ENCODE measurements at regions of chr15 and their contacts with region 1.

Region 1: DNA sequence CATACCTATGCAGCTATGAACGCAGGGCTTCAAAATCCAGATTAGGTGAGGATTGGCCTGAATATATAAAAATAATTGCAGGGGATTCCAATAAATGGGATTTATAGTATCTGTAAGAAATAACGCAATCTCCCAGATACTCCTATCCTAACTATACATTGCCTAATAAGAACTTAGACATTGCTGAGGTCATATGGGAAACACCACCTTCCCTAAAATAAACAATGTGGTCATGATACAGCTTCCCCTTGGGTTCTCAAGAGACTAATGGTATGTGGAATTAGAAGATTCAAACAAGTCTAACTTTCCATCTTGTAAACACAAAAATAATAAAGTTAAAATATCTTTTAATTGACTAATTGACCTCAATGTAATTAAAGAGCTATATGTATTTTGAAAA is 28.2 kb downstream of the UBE3A start:
- DNase-seq: no peak
- ATAC-seq: no peak
- H3K4me3 Mint-ChIP-seq: no peak overlapping the region
- H3K27ac Mint-ChIP-seq: no peak overlapping the region
- H3K4me1 Mint-ChIP-seq: peaks cover 53% of the 10 kb centered on the region
- H3K27me3 Mint-ChIP-seq: no peaks in the 10 kb centered on the region
- CTCF ChIP-seq: no peak

Region 2: GRCh38 chr15:25226360-25226759 is 184.3 kb before region 1 on chr15:
- CTCF ChIA-PET with region 1: no interaction called
- POLR2A ChIA-PET with region 1: no interaction called
- DNase-seq: no peak
- ATAC-seq: no peak
- H3K4me3 Mint-ChIP-seq: no peak overlapping the region
- H3K27ac Mint-ChIP-seq: no peak overlapping the region
- H3K4me1 Mint-ChIP-seq: no peaks in the 10 kb centered on the region
- H3K27me3 Mint-ChIP-seq: peaks cover 3% of the 10 kb centered on the region; the same call in 1 of the 2 replicates
- CTCF ChIP-seq: no peak

Region 3: DNA sequence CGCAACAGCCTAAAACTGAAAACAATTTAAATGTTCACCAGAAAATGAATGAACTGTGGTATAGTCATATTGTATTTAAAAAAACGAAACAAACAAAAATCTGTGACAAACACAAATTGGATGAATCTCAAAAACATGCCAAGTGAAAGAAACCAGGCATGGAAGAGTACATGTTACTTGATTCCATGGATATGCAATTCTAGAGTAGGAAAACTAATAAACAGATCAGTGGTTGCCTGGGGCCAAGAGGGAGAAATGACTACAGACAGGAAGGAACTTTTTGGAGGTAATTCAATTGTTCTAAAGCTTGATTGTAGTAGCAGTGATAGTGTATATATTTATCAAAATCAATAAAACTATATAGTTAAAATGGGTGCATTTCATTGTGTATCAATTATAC is 11.4 kb after region 1 on chr15:
- CTCF ChIA-PET with region 1: no interaction called
- POLR2A ChIA-PET with region 1: interaction called, 10 read pairs
- DNase-seq: no peak
- ATAC-seq: no peak
- H3K4me3 Mint-ChIP-seq: no peak overlapping the region
- H3K27ac Mint-ChIP-seq: no peak overlapping the region
- H3K4me1 Mint-ChIP-seq: peaks cover 50% of the 10 kb centered on the region
- H3K27me3 Mint-ChIP-seq: no peaks in the 10 kb centered on the region
- CTCF ChIP-seq: no peak

Measured in WTC11 (cell line).